Heart left ventricle (tissue), 16 donors: ENCODE measurements at regions of chr10 and their contacts with region 1.

Region 1: DNA sequence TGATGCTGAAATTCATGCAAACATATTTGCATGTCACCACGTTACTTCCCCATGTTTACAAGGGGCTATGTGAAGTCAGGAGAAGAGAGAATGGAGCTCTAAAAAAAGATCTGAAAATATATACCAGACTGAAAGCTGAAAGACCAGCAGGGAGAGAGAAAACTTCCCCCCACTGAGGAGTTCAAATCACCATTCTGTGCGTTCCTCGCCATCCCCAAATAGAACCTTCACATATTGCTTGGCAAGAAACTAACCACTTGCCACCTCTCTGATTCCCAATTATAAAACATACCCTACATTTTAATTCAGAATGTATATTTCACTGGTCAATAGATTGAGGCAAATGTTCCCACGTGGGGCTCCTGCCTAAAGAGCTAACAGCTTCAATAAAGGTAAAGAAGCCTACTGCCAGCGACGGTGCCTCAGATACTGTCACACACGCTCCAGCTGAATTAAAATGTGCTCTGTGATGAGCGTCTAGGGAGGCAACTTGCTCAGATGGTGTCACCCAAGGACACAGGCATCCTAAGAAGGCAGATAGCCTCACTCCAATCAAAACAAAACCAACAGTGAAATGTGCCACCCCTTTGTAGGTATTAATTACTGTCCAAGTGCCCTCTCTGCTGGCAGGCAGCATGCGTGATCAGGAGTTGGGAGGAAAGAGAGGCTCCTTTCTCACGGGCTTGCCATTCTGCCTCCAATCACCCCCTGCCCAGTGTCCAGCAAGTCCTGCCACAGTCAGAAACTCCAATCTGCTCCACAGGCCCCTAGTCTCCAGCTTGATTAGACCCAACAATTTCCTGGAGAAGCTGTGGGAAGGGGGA is 298.2 kb downstream of the GRID1 start:
- DNase-seq: no peak
- ATAC-seq: peak in 3 of 4 donors; percentile 47 to 82 (median 52)
- H3K4me3 ChIP-seq: no peak overlapping the region
- H3K27ac ChIP-seq: no peak overlapping the region
- H3K4me1 ChIP-seq: no peaks in the 10 kb centered on the region
- H3K27me3 ChIP-seq: peaks cover 0 to 5% (median 0%) of the 10 kb centered on the region in 9 donors
- CTCF ChIP-seq: peak in 4 of 12 donors; percentile 13 to 23 (median 20)
- POLR2A ChIP-seq: no peak

Region 2: DNA sequence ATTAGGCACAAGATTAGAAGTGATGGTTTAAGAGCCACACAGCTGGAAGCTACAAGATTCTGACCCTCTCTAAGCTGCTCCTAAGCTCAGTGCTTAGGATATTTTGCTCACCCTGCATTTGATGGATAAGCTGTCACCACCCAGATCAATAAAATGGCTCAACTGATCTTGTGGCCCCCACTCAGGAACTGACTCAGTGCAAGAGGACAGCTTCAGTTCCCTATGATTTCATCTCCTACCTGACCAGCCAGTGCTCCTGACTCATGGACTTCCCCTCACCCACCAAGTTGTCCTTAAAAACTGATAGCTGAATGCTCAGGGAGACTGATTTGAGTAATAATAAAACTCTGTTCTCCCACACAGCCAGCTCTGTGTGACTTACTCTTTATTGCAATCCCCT is 535.7 kb before region 1 on chr10:
- intact Hi-C with region 1: no loop called
- DNase-seq: no peak
- ATAC-seq: no peak
- H3K4me3 ChIP-seq: no peak overlapping the region
- H3K27ac ChIP-seq: no peak overlapping the region
- H3K4me1 ChIP-seq: no peaks in the 10 kb centered on the region
- H3K27me3 ChIP-seq: peaks cover 0 to 5% (median 0%) of the 10 kb centered on the region in 9 donors
- CTCF ChIP-seq: no peak
- POLR2A ChIP-seq: no peak

Region 3: DNA sequence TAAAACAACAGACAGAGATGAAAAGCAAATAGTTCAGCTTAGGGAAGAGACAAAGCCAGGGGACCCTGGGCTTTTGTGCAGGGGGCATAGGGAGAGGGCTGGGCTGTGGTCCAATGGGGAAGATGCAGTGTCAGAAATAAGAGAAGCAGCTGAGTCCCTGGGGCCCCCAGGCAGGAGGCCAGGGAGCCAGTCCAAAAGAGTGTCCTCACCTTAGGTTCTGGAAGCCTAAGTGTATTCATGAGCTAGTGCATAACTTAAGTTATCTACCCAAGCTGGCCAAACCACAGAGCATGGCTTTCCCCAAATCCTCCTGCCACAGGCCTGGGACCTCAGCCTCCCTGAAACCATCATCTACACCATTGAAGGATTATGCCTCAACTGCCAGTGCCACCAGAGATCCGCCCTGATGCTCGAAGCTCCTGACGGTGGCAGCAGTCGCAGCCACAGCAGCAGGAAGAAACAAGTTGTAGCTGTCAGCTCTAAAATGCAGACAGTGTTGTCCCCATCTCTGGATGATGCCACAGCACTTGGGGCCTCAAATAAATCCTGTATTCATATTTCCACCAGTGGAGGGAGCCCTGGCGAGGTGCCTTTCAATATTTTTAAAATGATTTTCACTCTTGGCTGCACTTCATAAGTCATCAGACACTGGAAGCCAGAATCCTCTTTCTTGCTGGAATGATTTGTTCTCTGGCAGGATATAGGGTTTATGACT is 276.5 kb before region 1 on chr10:
- intact Hi-C with region 1: loop called in 1 of 10 experiments (anchors 10 kb)
- DNase-seq: no peak
- ATAC-seq: peak in 2 of 4 donors; percentile 13 to 25
- H3K4me3 ChIP-seq: no peak overlapping the region
- H3K27ac ChIP-seq: no peak overlapping the region
- H3K4me1 ChIP-seq: peaks cover 0 to 9% (median 2%) of the 10 kb centered on the region in 12 donors
- H3K27me3 ChIP-seq: no peaks in the 10 kb centered on the region
- CTCF ChIP-seq: peak in 10 of 12 donors; percentile 14 to 57 (median 32)
- POLR2A ChIP-seq: no peak

Region 4: GRCh38 chr10:85959239-85959638 is 109.2 kb before region 1 on chr10:
- intact Hi-C with region 1: no loop called
- DNase-seq: no peak
- ATAC-seq: no peak
- H3K4me3 ChIP-seq: no peak overlapping the region
- H3K27ac ChIP-seq: no peak overlapping the region
- H3K4me1 ChIP-seq: no peaks in the 10 kb centered on the region
- H3K27me3 ChIP-seq: no peaks in the 10 kb centered on the region
- CTCF ChIP-seq: no peak
- POLR2A ChIP-seq: no peak